Thyroid gland (tissue), 4 donors: ENCODE measurements at regions of chr1 and their contacts with region 1.

Region 1: DNA sequence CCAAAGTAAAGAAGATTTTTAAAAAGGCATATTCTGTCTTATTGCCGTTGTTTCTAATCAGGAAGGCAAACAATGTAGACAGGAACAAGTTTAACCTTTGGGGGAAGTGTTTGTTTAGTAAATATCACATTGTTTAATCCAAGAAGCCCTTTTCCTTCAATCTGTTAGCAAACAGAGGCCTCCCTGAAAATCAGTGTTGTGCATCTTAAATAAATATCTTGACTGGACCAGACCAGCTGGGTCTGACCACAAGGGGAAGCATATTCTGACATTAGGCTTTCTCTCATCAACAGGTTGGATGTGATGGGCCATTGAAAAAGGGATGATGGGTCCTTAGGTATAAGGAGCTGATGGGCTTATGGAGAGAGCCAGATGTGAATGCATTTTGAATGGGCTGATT is 81.8 kb upstream of the SGIP1 start:
- DNase-seq: no peak
- H3K4me3 ChIP-seq: no peak overlapping the region
- H3K27ac ChIP-seq: no peak overlapping the region
- H3K4me1 ChIP-seq: peaks cover 15 to 17% of the 10 kb centered on the region in 2 donors
- H3K27me3 ChIP-seq: no peaks in the 10 kb centered on the region
- CTCF ChIP-seq: no peak
- POLR2A ChIP-seq: no peak

Region 2: DNA sequence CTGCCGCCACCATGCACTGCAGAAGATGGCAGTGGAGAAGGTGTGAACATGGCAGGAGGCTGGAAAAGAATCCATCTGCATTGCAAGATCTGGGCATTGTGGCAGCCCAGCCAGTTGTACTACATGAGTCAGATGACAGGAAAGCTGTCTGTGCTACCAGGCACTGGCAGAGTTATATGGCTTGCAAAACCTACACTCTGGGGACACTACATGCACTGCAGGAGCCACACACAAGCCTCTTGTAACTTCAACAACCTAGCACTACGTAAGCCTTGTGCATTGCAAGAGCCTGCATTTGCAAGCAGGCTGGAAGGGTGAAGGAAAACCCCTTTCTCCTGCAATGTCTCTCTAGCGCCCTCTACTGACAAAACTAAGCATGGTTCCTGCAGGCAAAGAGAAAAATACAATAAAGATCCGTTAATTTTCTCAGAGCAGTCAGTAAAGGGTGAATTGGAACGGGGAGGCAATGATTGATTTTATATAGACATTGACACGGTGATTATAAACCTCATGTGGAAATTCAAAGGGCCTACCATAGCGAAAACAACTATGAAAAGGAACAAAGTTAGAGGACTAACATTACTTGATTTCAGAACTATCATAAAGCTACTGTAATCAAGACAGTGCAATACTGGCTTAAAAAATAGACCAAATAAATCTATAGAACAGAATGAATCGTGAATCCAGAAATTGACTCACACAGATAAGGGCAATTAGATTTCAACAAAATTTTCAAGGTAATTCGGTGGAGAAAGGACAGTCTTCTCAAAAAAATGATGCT is 273.9 kb after region 1 on chr1:
- intact Hi-C with region 1: loop called (anchors 10 kb)
- DNase-seq: peak; percentile 50 to 51
- H3K4me3 ChIP-seq: no peak overlapping the region
- H3K27ac ChIP-seq: peak overlapping the region in 1 of 3 donors; percentile 61
- H3K4me1 ChIP-seq: peaks cover 0 to 6% of the 10 kb centered on the region in 2 donors
- H3K27me3 ChIP-seq: no peaks in the 10 kb centered on the region
- CTCF ChIP-seq: peak; percentile 77 to 99 (median 92)
- POLR2A ChIP-seq: no peak